Activated B cell treated with CpG ODN at 0.5 μM for 24 hours (primary cell): ENCODE measurements at regions of chr7 and their contacts with region 1.

Region 1: DNA sequence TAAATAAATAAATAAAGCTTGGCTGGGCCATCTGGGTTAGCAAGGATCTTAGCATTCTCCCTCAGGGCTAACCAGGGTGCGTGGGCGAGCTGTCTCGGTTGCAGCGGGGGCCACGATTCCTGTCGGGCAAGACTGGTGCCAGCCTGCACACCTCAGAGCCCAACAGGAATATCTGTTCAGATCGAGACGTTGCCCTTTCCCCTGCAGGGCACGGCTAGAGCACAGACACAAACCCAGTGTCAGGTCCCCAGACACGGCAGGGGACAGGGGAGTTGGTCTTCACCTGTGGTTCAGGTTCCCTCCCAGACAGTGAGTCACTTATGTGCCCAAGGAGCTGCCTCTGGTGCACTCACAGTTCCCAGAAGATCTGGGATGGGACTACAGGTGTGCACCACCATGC is 75.5 kb upstream of the GTF2I start:
- DNase-seq: no peak
- ATAC-seq: no peak
- H3K4me3 Mint-ChIP-seq: no peak overlapping the region
- H3K27ac Mint-ChIP-seq: no peak overlapping the region
- H3K4me1 Mint-ChIP-seq: peaks cover 6% of the 10 kb centered on the region
- H3K27me3 Mint-ChIP-seq: no peaks in the 10 kb centered on the region
- CTCF ChIP-seq: no peak

Region 2: DNA sequence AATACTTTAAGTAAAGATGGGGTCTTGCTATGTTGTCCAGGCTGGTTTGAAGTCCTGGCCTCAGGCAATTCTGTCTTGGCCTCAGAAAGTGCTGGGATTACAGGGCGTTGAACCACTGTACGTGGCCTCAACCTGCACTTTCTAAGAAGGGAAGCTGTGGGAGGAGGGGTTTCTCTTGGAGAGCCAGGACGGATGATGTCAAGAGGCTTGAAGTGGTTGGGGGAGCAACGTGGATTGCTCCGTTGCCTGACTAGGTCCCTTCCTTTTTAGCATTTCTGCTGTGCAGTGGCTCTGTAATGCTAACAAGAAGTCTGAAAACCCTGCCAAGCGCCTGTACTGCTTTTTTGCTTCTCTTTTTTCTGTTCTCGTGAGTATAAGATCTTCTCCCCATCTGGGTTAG is 891.4 kb before region 1 on chr7:
- CTCF ChIA-PET with region 1: no interaction called
- POLR2A ChIA-PET with region 1: no interaction called
- intact Hi-C with region 1: no loop called
- DNase-seq: no peak
- ATAC-seq: no peak
- H3K4me3 Mint-ChIP-seq: no peak overlapping the region
- H3K27ac Mint-ChIP-seq: no peak overlapping the region
- H3K4me1 Mint-ChIP-seq: peaks cover 14% of the 10 kb centered on the region
- H3K27me3 Mint-ChIP-seq: no peaks in the 10 kb centered on the region
- CTCF ChIP-seq: no peak

Region 3: GRCh38 chr7:74439546-74439945 is 142.5 kb before region 1 on chr7:
- CTCF ChIA-PET with region 1: no interaction called
- POLR2A ChIA-PET with region 1: no interaction called
- intact Hi-C with region 1: no loop called
- DNase-seq: no peak
- ATAC-seq: no peak
- H3K4me3 Mint-ChIP-seq: no peak overlapping the region
- H3K27ac Mint-ChIP-seq: no peak overlapping the region
- H3K4me1 Mint-ChIP-seq: no peaks in the 10 kb centered on the region
- H3K27me3 Mint-ChIP-seq: peaks cover 5% of the 10 kb centered on the region
- CTCF ChIP-seq: no peak

Region 4: DNA sequence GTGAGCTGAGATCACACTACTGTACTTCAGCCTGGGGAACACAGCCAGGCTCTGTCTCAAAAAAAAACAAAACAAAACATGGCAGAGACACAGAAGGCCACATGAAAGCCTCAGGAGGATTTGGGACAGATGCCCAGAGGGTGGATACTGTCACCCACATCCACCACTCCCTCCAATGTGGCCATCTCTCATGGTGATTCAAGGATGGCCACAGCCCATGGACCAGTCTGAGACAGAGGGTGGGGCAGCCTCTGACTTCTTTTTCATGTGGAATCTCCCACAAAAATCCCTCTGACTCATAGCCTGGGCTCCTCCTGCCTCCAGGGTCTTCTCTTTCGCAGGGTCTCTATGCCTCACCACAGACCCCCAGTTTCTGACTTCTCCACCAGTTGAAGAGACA is 16.5 kb after region 1 on chr7:
- CTCF ChIA-PET with region 1: no interaction called
- POLR2A ChIA-PET with region 1: no interaction called
- intact Hi-C with region 1: loop called (anchors 2 kb)
- DNase-seq: no peak
- ATAC-seq: no peak
- H3K4me3 Mint-ChIP-seq: no peak overlapping the region
- H3K27ac Mint-ChIP-seq: no peak overlapping the region
- H3K4me1 Mint-ChIP-seq: peaks cover 2% of the 10 kb centered on the region
- H3K27me3 Mint-ChIP-seq: no peaks in the 10 kb centered on the region
- CTCF ChIP-seq: no peak

Region 5: DNA sequence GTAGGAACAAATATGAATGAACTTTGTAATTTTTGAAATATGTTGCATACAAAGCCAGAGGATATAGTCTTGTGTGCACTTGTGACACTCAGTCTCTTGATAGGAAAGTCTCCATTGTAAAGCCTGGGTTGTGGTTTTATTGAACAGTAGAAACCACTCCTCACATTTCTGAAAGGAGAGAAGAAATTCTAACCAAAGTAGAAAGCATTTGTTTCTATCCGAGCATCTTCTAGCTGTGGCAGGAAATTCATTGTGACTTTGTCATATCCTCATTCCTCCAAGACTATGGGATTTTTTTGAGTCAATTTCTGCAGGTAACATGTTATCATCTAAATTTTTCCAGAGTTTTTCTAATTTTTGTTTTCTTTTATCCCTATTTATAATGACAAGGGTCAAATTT is 136.3 kb after region 1 on chr7:
- CTCF ChIA-PET with region 1: no interaction called
- POLR2A ChIA-PET with region 1: no interaction called
- intact Hi-C with region 1: no loop called
- DNase-seq: no peak
- ATAC-seq: no peak
- H3K4me3 Mint-ChIP-seq: no peak overlapping the region
- H3K27ac Mint-ChIP-seq: no peak overlapping the region
- H3K4me1 Mint-ChIP-seq: no peaks in the 10 kb centered on the region
- H3K27me3 Mint-ChIP-seq: no peaks in the 10 kb centered on the region
- CTCF ChIP-seq: no peak

Region 6: GRCh38 chr7:76216381-76217082 is 1634.5 kb after region 1 on chr7:
- CTCF ChIA-PET with region 1: no interaction called
- POLR2A ChIA-PET with region 1: no interaction called
- intact Hi-C with region 1: no loop called
- DNase-seq: no peak
- ATAC-seq: no peak
- H3K4me3 Mint-ChIP-seq: no peak overlapping the region
- H3K27ac Mint-ChIP-seq: no peak overlapping the region
- H3K4me1 Mint-ChIP-seq: no peaks in the 10 kb centered on the region
- H3K27me3 Mint-ChIP-seq: peaks cover 26% of the 10 kb centered on the region
- CTCF ChIP-seq: no peak